Activated CD4-positive, alpha-beta memory T cell treated with anti-CD3 and anti-CD28 coated beads for 36 hours (primary cell): ENCODE measurements at regions of chr4 and their contacts with region 1.

Region 1: DNA sequence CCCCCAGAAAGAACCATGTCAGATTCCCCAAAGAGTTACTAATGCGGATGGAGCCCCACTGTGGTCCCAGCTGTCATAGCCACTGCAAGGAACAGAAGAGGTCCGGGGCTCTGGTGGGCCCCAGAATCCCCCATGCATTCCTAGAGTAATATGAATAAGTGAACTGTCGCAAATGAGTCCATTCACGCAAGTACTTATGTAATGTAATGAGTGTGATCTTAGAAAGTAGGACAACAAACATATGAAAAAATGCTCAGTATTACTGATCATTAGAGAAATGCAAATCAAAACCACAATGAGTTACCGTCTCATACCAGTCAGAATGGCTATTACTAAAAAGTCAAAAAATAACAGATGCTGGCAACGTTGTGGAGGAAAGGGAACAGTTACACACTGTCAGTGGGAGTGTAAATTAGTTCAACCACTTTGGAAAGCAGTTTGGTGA is 141.5 kb upstream of the RBPJ start:
- DNase-seq: peak; percentile 72
- H3K4me3 Mint-ChIP-seq: no peak overlapping the region
- H3K27ac Mint-ChIP-seq: peak overlapping the region; percentile 82
- H3K4me1 Mint-ChIP-seq: peaks cover 29% of the 10 kb centered on the region
- H3K27me3 Mint-ChIP-seq: no peaks in the 10 kb centered on the region

Region 2: GRCh38 chr4:26028793-26029567 is 150.4 kb before region 1 on chr4:
- CTCF ChIA-PET with region 1: no interaction called
- POLR2A ChIA-PET with region 1: no interaction called
- intact Hi-C with region 1: loop called (anchors 5 kb)
- DNase-seq: peak; percentile 85
- H3K4me3 Mint-ChIP-seq: no peak overlapping the region
- H3K27ac Mint-ChIP-seq: no peak overlapping the region
- H3K4me1 Mint-ChIP-seq: peaks cover 16% of the 10 kb centered on the region
- H3K27me3 Mint-ChIP-seq: peaks cover 2% of the 10 kb centered on the region

Region 3: GRCh38 chr4:26081795-26082498 is 97.4 kb before region 1 on chr4:
- CTCF ChIA-PET with region 1: interaction called, 7 read pairs
- POLR2A ChIA-PET with region 1: interaction called, 4 read pairs
- intact Hi-C with region 1: loop called (anchors 1 kb)
- DNase-seq: no peak
- H3K4me3 Mint-ChIP-seq: peak overlapping the region; percentile 1
- H3K27ac Mint-ChIP-seq: peak overlapping the region; percentile 90
- H3K4me1 Mint-ChIP-seq: peaks cover 88% of the 10 kb centered on the region
- H3K27me3 Mint-ChIP-seq: no peaks in the 10 kb centered on the region

Region 4: DNA sequence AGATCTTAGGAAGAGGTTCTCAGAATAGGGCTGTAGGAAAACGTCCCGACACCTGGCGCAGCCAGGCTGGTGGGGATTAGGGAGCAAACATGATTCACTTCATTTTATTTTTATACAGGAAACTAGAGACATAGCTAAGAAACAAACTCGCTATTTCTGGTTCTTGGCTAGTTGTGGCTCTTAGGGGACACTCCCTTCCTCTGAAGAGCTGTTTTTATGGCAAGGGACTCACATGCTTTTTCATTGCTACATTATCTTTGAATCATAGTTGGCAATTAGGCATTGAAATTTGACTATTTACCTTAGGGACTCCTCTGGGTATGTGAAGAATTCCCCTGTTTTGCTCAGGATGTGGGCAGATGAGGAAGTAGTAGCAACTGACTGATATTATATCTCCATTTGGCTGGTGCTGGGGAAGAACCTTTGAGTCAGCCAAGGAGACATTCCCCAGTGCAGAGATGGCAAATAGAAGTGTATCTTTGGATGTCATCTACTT is 90.9 kb before region 1 on chr4:
- CTCF ChIA-PET with region 1: interaction called, 3 read pairs
- POLR2A ChIA-PET with region 1: interaction called, 3 read pairs
- intact Hi-C with region 1: loop called (anchors 1 kb)
- DNase-seq: peak; percentile 59
- H3K4me3 Mint-ChIP-seq: peak overlapping the region; percentile 62
- H3K27ac Mint-ChIP-seq: peak overlapping the region; percentile 94
- H3K4me1 Mint-ChIP-seq: peaks cover 61% of the 10 kb centered on the region
- H3K27me3 Mint-ChIP-seq: no peaks in the 10 kb centered on the region

Region 5: DNA sequence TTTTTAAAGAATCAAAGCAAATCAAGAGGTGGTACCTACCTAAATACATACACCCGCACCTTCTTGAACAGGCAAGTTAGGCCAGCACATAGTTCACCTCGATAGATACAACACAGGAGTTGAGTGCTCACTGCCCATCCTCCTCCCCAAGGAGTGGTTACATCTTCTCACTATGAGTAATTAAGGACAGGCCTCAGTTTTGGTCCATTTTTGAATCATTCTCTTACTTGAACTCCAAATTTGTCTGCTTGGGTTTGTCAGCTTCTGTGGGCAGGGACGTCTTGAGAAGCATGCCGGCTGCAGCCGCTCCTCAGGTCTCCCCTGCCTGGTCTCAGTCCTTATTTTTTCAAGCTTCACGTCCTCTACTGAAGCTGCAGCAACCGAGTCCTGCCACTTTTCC is 49.2 kb before region 1 on chr4:
- CTCF ChIA-PET with region 1: no interaction called
- POLR2A ChIA-PET with region 1: interaction called, 3 read pairs
- intact Hi-C with region 1: loop called (anchors 5 kb)
- DNase-seq: peak; percentile 59
- H3K4me3 Mint-ChIP-seq: no peak overlapping the region
- H3K27ac Mint-ChIP-seq: peak overlapping the region; percentile 67
- H3K4me1 Mint-ChIP-seq: peaks cover 62% of the 10 kb centered on the region
- H3K27me3 Mint-ChIP-seq: no peaks in the 10 kb centered on the region

Region 6: DNA sequence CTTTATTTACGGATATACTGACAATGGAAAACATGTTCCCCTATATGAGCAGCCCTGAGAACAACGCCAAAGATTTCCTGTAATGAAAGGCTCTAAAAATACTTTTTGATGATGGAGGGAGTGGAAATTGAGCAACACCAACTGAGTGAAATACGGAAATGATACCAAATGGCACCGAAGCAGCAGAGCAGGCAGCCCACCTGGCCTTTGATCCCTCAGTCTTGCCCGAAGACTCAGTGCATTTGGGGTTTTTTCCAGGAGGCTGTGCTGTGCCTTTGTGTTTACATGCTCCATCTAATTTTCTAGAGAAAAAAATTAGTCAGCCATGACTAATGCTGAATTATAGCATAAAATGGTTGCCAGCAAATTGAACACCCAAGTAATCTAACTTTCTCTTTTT is 28.4 kb before region 1 on chr4:
- CTCF ChIA-PET with region 1: interaction called, 3 read pairs
- POLR2A ChIA-PET with region 1: no interaction called
- intact Hi-C with region 1: loop called (anchors 2 kb)
- DNase-seq: peak; percentile 79
- H3K4me3 Mint-ChIP-seq: no peak overlapping the region
- H3K27ac Mint-ChIP-seq: peak overlapping the region; percentile 87
- H3K4me1 Mint-ChIP-seq: peaks cover 47% of the 10 kb centered on the region
- H3K27me3 Mint-ChIP-seq: no peaks in the 10 kb centered on the region

Region 7: DNA sequence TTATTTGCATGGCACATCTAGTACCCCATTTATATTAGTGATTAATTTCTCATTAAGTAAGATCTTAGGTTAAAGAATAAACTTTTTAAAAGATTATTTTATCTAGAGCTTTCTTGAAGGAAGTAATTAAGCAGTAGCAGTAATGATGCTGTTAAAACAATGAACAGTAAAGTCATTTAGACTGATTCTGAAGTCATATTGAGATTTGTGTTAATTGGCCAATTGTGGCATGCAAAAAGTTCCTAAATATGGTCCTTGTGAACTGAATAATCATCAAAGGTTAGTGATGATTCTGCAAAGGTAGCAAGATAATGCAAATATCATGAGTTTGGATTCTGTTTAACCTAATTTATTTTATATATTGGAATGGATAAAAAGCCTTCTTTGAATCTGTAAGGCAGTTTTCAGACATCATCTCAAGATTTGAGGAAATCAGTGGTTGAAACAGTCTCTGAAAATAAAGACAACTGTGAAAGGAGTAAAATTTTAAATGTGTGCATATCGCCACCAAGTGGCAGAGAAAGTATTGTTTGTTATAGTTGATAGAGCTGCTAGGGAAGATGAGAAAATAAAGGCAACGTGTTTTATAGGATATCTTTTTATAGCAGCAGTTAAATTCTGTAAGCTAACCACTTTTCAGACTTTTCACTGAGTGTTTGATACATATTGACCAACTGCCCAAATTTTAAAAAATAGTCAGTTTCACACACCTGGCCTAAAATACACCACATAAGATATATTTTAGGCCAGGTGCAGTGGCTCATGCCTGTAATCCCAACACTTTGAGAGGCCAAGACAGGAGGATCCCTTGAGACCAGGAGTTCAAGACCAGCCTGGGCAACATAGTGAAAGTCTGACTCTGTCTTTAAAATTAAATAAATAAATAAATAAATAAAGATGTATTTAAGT is 231.3 kb after region 1 on chr4:
- CTCF ChIA-PET with region 1: no interaction called
- POLR2A ChIA-PET with region 1: no interaction called
- intact Hi-C with region 1: loop called (anchors 5 kb)
- DNase-seq: no peak
- H3K4me3 Mint-ChIP-seq: no peak overlapping the region
- H3K27ac Mint-ChIP-seq: no peak overlapping the region
- H3K4me1 Mint-ChIP-seq: peaks cover 2% of the 10 kb centered on the region
- H3K27me3 Mint-ChIP-seq: no peaks in the 10 kb centered on the region